SK-N-SH (cell line): ENCODE measurements at regions of chr14 and their contacts with region 1.

Region 1: DNA sequence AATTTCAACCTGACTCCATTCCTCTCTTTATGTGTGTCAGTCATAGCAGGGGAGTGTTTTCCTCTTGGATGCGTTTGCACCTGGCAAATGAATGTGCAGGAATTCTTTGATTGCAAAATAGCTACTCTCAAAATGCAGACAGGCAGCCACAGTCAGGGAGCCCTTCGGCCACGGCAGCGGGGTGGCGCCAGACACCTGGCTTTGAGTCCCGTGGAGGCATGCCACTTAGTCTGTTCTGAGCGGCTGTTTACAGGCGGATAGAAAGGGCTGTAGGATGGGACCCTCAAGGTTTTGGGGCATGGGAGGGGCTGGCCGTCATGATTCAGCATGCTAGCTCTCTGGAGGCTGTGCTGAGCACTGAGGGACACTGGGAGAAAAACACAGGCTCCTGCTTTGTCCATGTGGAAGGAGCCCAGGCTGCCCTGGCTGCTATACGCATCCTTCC is 117.1 kb downstream of the SLC25A47 start:
- DNase-seq: peak; percentile 66
- H3K4me3 ChIP-seq: peak overlapping the region; percentile 0 to 12; a peak in 2 of 4 replicates
- H3K27ac ChIP-seq: peak overlapping the region; percentile 68 to 100
- H3K4me1 ChIP-seq: peaks cover 34 to 95% of the 10 kb centered on the region in 2 experiments
- H3K27me3 ChIP-seq: no peaks in the 10 kb centered on the region
- CTCF ChIP-seq: peak; percentile 72
- EP300 ChIP-seq: no peak
- RAD21 ChIP-seq: peak; percentile 89

Region 2: DNA sequence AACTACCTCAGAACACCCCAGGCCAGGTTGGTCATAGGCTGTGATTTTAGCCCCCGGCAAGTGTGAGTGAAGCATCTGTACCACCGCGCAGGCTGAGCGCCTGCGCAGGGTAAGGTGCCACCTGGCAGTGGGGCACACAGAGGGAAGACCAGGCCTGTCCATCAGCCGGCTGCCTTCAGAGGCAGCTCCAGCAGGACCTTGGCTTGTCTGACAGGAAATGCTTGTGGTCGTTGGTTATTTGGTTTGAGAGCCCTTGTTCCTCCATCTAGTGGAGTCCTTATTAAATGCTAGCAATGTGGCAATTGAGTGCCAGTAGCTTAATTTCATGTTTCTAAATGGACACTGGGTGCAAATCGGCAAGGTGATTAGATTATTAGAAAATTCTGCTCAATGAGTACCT is 161.5 kb before region 1 on chr14:
- CTCF ChIA-PET with region 1: no interaction called
- POLR2A ChIA-PET with region 1: no interaction called
- DNase-seq: no peak
- H3K4me3 ChIP-seq: no peak overlapping the region
- H3K27ac ChIP-seq: peak overlapping the region; percentile 45 to 47; a peak in 3 of 4 replicates
- H3K4me1 ChIP-seq: peaks cover 4 to 11% of the 10 kb centered on the region in 2 experiments
- H3K27me3 ChIP-seq: no peaks in the 10 kb centered on the region
- CTCF ChIP-seq: peak; percentile 42
- EP300 ChIP-seq: no peak
- RAD21 ChIP-seq: no peak

Region 3: DNA sequence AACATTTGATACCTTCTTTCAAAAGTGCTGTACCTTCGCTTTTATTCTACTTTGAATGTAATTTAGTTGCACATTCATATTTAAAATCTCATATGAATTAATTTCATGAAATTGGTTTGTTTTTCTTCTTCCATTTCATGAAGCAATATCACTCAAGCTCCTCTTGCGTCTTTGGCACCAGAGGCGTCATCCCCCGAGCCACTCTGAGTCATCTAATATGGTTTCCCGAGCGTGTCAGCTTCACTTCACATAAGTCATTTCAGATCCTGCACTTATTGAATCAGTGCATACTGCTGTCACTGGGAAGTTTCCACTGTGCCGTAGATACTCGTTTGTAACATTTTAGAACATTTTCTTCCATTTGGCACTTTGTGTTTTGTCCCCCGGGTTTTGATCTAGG is 11.5 kb before region 1 on chr14:
- CTCF ChIA-PET with region 1: interaction called, 148 read pairs
- POLR2A ChIA-PET with region 1: interaction called, 45 read pairs
- DNase-seq: no peak
- H3K4me3 ChIP-seq: no peak overlapping the region
- H3K27ac ChIP-seq: peak overlapping the region; percentile 76 to 100
- H3K4me1 ChIP-seq: peaks cover 18 to 55% of the 10 kb centered on the region in 2 experiments; a peak in 3 of 4 replicates
- H3K27me3 ChIP-seq: no peaks in the 10 kb centered on the region
- CTCF ChIP-seq: no peak
- EP300 ChIP-seq: peak; percentile 65 to 66; a peak in 3 of 4 replicates
- RAD21 ChIP-seq: no peak

Region 4: DNA sequence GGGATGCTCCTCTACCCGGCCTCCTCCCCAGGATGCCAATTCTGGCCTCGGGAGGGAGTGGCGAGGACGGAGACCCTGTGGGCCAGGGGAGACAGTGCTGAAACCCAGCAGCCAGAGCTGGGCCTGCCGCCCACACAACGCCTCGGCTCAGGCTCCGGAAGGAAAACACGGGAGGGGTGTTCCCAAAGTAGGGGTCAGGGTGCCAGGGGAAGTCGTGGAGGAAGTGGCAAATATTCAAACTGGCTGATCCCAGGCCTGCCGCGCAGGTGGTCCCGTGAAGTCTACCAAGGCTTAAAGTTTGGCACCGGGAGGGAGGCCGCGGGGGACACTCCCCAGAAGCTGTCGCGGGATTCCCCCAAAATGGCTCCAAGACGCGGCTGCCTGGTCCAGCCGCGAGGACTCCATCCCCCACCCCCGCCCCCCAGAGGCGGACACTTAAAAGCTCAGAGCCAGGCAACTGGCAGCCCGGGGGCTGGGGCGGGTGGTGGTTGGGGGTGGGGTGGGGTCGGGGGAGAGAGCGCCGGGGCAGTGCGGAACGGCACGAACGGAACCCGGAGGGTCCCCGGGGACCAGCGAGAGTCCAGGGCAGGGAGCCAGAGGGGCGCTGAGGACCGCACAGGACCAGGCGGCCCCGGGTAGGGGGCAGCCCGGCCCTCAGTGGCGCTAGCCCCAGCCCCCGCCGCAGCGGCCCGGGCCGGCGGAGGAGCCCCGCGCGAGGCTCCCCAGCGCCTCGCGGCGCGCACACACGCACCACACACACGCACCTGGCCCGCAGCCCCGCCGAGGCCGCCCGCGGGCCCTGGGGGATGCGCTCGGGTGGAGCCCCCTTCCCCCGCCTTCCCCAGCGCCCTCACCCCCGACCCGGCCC is 127.0 kb after region 1 on chr14:
- CTCF ChIA-PET with region 1: interaction called, 12 read pairs
- POLR2A ChIA-PET with region 1: interaction called, 23 read pairs
- DNase-seq: peak; percentile 85
- H3K4me3 ChIP-seq: peak overlapping the region; percentile 58 to 59; a peak in 3 of 4 replicates
- H3K27ac ChIP-seq: peak overlapping the region in 1 of 2 experiments; percentile 94; a peak in 2 of 4 replicates
- H3K4me1 ChIP-seq: peaks cover 0 to 66% of the 10 kb centered on the region in 2 experiments; a peak in 1 of 4 replicates
- H3K27me3 ChIP-seq: peaks cover 18% of the 10 kb centered on the region
- CTCF ChIP-seq: no peak
- EP300 ChIP-seq: no peak
- RAD21 ChIP-seq: no peak

Region 5: GRCh38 chr14:100662879-100663760 is 222.9 kb after region 1 on chr14:
- CTCF ChIA-PET with region 1: interaction called, 17 read pairs
- POLR2A ChIA-PET with region 1: no interaction called
- DNase-seq: peak; percentile 85
- H3K4me3 ChIP-seq: no peak overlapping the region; a peak in 1 of 4 replicates
- H3K27ac ChIP-seq: peak overlapping the region in 1 of 2 experiments; percentile 77; a peak in 2 of 4 replicates
- H3K4me1 ChIP-seq: peaks cover 0 to 48% of the 10 kb centered on the region in 2 experiments; a peak in 1 of 4 replicates
- H3K27me3 ChIP-seq: no peaks in the 10 kb centered on the region
- CTCF ChIP-seq: peak; percentile 96
- EP300 ChIP-seq: no peak
- RAD21 ChIP-seq: peak; percentile 89

Region 6: GRCh38 chr14:100783630-100784370 is 343.6 kb after region 1 on chr14:
- CTCF ChIA-PET with region 1: interaction called, 3 read pairs
- POLR2A ChIA-PET with region 1: interaction called, 26 read pairs
- DNase-seq: peak; percentile 84
- H3K4me3 ChIP-seq: no peak overlapping the region
- H3K27ac ChIP-seq: peak overlapping the region in 1 of 2 experiments; percentile 100; a peak in 2 of 4 replicates
- H3K4me1 ChIP-seq: peaks cover 0 to 87% of the 10 kb centered on the region in 2 experiments; a peak in 1 of 4 replicates
- H3K27me3 ChIP-seq: no peaks in the 10 kb centered on the region
- CTCF ChIP-seq: no peak
- EP300 ChIP-seq: peak in 1 of 2 experiments; percentile 98; a peak in 2 of 4 replicates
- RAD21 ChIP-seq: peak; percentile 23